ENCODE measurements at regions of chr22 and their contacts with region 1.

Region 1: DNA sequence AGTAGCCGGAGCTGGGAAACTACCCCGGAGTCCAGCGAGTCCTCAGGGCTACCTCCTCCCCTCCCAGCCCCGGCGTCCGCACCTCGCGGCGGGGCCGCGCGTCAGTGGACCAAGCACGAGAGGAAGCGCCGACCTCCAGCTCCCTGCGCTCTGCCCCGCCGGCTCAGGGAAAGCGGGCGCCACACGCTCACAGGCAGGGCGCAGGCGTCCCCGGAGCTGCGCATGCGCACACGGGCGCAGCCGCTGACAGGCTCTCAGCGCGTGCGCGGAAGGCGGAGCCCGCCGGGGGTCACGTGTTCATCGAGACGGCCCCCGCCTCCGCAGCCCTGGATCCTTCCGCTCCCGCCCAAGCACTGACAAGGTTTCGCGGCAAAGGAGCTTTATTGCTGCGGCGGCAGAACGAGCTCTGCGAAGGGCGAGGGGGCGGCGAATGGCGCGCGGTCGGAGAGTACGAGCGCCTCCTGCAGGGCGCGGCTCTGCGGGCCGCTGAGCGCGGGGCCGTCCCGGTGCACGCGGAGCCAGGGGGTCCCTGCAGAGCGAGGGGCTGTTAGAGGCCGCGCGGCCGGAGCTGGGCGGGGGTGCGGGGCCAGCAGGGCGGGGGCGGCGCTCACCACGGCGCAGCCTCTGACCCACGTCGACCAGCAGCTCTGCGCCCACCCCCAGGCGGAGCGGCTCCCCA is at the start of gene SCO2:
- DNase-seq: peak; percentile 94 to 99 (median 97)
- ATAC-seq: peak; percentile 76
- H3K4me3 ChIP-seq: peak within 1 kb of the TSS; percentile 69 to 92
- H3K4me3 Mint-ChIP-seq: peak within 1 kb of the TSS; percentile 88
- H3K27ac ChIP-seq: peak within 1 kb of the TSS; percentile 68 to 82
- H3K27ac Mint-ChIP-seq: peak within 1 kb of the TSS; percentile 89
- H3K4me1 ChIP-seq: peaks cover 43% of the 10 kb centered on the region
- H3K4me1 Mint-ChIP-seq: peaks cover 27% of the 10 kb centered on the region
- H3K27me3 ChIP-seq: no peaks in the 10 kb centered on the region
- H3K27me3 Mint-ChIP-seq: no peaks in the 10 kb centered on the region
- CTCF ChIP-seq: no peak
- total RNA-seq, gene SCO2: 1.5 to 4.2 TPM

Region 2: DNA sequence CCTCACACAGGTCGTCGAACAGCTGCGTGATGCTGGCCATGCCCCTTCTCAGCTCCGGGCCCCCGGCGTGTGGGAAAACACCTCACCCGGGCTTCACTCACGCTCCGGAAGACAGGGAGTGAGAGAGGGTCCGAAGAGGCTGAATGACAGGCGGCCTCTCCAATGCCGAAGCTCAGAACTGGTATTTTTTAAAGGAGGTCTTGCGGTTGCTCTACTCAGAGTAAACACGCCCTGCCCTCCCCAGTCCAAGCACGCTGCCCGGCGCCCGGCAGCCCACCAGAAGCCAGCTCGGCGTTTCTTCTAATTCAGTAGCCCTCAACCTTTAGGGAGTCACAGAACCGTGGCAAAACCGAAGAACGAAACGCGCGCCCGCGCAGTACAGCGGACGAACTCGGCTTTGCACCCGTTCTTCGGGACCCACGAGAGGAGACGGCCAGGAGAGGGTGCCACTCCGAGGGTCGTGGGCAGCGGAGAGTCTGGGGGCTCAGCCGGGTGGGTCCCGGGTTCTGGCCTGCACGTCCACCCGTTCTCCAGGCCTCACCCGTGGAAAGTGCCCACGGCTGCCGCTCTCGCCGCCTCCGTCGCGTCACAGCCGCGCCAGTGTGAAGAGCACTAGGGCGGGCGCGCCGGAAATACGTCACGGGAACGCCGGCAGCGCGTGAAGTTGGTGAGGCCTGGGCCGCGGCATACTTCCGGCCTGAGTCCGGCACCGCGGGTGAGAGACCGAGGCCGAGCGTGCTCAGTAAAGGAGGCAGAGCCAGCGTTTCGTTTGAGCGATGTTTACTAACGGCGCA is 280.9 kb before region 1 on chr22 and contains the start of gene TUBGCP6:
- CTCF ChIA-PET with region 1: interaction called, 4 read pairs
- POLR2A ChIA-PET with region 1: interaction called, 3 read pairs
- intact Hi-C with region 1: loop called in 1 of 2 experiments (anchors 1 kb)
- DNase-seq: peak; percentile 77 to 96 (median 91)
- ATAC-seq: peak; percentile 77
- H3K4me3 ChIP-seq: peak within 1 kb of the TSS; percentile 99
- H3K4me3 Mint-ChIP-seq: peak within 1 kb of the TSS; percentile 100
- H3K27ac ChIP-seq: peak within 1 kb of the TSS; percentile 94 to 99
- H3K27ac Mint-ChIP-seq: peak within 1 kb of the TSS; percentile 100
- H3K4me1 ChIP-seq: peaks cover 56% of the 10 kb centered on the region
- H3K4me1 Mint-ChIP-seq: peaks cover 51% of the 10 kb centered on the region
- H3K27me3 ChIP-seq: no peaks in the 10 kb centered on the region
- H3K27me3 Mint-ChIP-seq: no peaks in the 10 kb centered on the region
- CTCF ChIP-seq: peak; percentile 27
- total RNA-seq, gene TUBGCP6: 121 to 122 TPM

Region 3: DNA sequence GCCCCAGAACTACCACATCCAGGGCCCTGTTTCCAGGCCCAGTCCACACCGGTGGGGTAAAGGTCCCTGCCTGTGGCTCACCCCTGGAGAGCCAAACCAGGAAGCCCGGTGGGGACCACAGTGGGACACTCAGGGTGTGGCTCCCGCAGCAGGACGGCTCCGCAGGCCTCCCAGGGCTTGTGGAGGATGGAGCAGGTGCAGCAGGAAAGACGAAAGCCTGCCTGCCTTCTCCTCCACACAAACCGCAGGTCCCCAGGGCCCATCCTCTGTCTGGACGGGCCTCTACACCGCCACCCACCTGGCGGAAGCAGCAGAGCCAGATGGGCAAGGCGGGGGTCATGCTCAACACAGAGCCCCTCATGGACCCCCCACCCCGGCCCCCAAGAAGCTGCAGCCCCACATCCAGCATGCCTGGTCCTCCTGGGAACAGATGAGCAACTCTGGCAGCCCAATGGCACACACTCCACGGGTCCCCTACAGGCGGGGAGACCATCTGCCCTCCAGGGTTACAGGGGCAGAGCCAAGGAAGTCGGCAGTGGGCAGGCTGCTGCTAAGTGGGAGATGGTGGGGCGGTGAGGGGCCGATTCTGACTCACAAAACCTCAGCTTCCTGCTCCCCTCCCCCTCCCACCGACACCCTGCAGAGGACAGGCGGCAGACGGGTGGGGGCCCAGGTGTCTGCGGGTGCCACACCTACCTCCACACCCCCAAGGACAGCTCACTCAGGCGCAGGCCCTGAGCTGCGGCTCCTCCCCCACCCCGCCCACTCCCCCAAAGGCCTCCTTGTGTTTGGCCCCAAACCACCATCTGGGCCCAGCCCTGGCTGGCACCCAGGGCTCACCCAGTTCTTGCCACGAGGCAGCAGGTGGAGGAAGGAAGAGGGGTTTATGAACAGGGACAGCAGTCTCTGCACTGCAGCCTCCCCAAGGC is 55.9 kb before region 1 on chr22:
- CTCF ChIA-PET with region 1: interaction called, 10 read pairs
- POLR2A ChIA-PET with region 1: interaction called, 22 read pairs
- intact Hi-C with region 1: loop called (anchors 1 kb)
- DNase-seq: peak; percentile 94 to 100 (median 99)
- ATAC-seq: peak; percentile 85
- H3K4me3 ChIP-seq: peak overlapping the region; percentile 50 to 79
- H3K4me3 Mint-ChIP-seq: peak overlapping the region; percentile 75
- H3K27ac ChIP-seq: peak overlapping the region; percentile 81 to 82
- H3K27ac Mint-ChIP-seq: peak overlapping the region; percentile 96
- H3K4me1 ChIP-seq: peaks cover 79% of the 10 kb centered on the region
- H3K4me1 Mint-ChIP-seq: peaks cover 76% of the 10 kb centered on the region
- H3K27me3 ChIP-seq: no peaks in the 10 kb centered on the region
- H3K27me3 Mint-ChIP-seq: no peaks in the 10 kb centered on the region
- CTCF ChIP-seq: peak; percentile 23

Region 4: GRCh38 chr22:50537765-50538164 is 12.2 kb after region 1 on chr22:
- CTCF ChIA-PET with region 1: interaction called, 26 read pairs
- POLR2A ChIA-PET with region 1: interaction called, 52 read pairs
- intact Hi-C with region 1: no loop called
- DNase-seq: no peak
- ATAC-seq: no peak
- H3K4me3 ChIP-seq: no peak overlapping the region
- H3K4me3 Mint-ChIP-seq: peak overlapping the region; percentile 8
- H3K27ac ChIP-seq: peak overlapping the region in 1 of 2 experiments; percentile 97
- H3K27ac Mint-ChIP-seq: peak overlapping the region; percentile 35
- H3K4me1 ChIP-seq: peaks cover 17% of the 10 kb centered on the region
- H3K4me1 Mint-ChIP-seq: peaks cover 28% of the 10 kb centered on the region
- H3K27me3 ChIP-seq: no peaks in the 10 kb centered on the region
- H3K27me3 Mint-ChIP-seq: peaks cover 4% of the 10 kb centered on the region
- CTCF ChIP-seq: no peak

Region 5: DNA sequence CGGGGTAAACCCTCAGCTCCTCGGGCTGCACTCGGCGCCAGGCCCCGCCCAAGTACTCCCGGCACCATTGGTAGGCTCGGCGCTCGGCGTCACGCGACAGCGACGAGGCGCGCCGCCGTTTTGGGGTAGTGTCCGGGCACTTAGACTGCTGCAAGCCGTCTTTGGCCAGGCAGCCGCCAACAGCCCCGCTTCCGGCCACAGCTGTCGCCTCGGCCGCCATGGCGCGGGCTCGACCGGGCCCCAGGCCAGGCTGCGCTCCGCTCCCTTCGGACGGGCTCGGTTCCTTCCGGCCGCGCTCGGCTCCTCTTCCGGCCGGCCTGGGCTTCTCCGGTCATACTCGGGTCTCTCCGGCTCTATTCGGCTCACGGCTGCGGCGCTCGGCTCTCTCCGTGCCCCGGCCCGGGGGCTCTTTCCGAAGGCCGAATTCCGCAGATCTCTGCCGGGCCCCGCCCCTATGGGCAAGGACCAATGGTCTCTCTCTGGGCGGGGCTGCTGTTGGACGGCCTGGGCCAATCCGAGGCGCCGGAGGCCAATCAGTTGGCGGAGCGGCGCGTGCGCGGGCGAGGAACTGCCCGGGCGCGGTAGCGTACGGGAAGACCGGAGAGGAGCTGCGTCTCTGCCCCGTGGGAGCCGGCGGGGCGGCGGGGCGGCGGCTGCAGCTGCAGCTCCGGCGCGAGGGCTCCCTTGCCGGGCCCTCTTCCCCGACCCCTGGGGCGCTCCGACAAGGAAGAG is 57.2 kb after region 1 on chr22 and contains the start of gene CHKB:
- CTCF ChIA-PET with region 1: interaction called, 5 read pairs
- POLR2A ChIA-PET with region 1: interaction called, 15 read pairs
- intact Hi-C with region 1: loop called (anchors 1 kb)
- DNase-seq: peak; percentile 95 to 99 (median 98)
- ATAC-seq: peak; percentile 94
- H3K4me3 ChIP-seq: peak within 1 kb of the TSS; percentile 77 to 78
- H3K4me3 Mint-ChIP-seq: peak within 1 kb of the TSS; percentile 93
- H3K27ac ChIP-seq: peak within 1 kb of the TSS; percentile 93 to 94
- H3K27ac Mint-ChIP-seq: peak within 1 kb of the TSS; percentile 97
- H3K4me1 ChIP-seq: peaks cover 16% of the 10 kb centered on the region
- H3K4me1 Mint-ChIP-seq: peaks cover 30% of the 10 kb centered on the region
- H3K27me3 ChIP-seq: no peaks in the 10 kb centered on the region
- H3K27me3 Mint-ChIP-seq: no peaks in the 10 kb centered on the region
- CTCF ChIP-seq: no peak
- total RNA-seq, gene CHKB: 112 to 115 TPM